A673 (cell line): ENCODE measurements at regions of chr3 and their contacts with region 1.

Region 1: DNA sequence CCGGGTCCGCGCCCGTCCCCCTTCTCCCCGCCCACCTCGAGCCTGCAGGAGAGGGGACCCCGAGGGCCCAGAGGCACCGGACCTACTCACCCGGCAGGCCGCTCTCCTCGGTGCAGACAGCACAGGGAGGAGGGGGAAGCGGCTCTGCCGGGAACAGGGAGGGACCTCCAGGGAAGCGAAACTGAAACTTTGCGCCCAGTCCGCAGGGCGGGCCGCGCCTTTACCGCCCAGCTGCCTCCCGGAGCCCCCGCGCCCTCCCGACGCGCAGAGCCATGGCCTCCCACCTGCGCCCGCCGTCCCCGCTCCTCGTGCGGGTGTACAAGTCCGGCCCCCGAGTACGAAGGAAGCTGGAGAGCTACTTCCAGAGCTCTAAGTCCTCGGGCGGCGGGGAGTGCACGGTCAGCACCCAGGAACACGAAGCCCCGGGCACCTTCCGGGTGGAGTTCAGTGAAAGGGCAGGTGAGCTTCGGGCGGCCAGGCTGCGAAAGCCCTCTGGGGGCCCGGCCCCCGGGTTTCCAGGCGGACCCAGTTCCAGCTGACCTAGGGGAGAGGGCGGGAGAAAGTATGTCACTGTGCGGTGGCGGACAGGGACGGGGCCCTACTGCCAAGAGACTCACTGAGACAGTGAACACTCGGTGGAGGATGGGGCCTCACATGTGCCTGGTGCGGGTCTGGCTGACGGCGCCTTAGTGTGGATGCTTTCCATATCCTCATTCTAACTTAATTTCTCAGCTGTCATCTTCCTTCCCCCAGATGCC is at the starts of genes DTX3L and PARP9:
- DNase-seq: peak; percentile 80
- H3K4me3 ChIP-seq: peak within 1 kb of the TSS; percentile 63
- H3K27ac ChIP-seq: peak within 1 kb of the TSS; percentile 83
- H3K4me1 ChIP-seq: peaks cover 15% of the 10 kb centered on the region
- H3K27me3 ChIP-seq: no peaks in the 10 kb centered on the region
- CTCF ChIP-seq: no peak
- total RNA-seq, gene DTX3L: 16.6 and 18.9 TPM in 2 replicates
- total RNA-seq, gene PARP9: 10.6 and 10.8 TPM in 2 replicates

Region 2: GRCh38 chr3:122004991-122005565 is 559.3 kb before region 1 on chr3:
- CTCF ChIA-PET with region 1: no interaction called
- POLR2A ChIA-PET with region 1: no interaction called
- intact Hi-C with region 1: no loop called
- DNase-seq: no peak
- H3K4me3 ChIP-seq: no peak overlapping the region
- H3K27ac ChIP-seq: no peak overlapping the region
- H3K4me1 ChIP-seq: peaks cover 8% of the 10 kb centered on the region
- H3K27me3 ChIP-seq: no peaks in the 10 kb centered on the region
- CTCF ChIP-seq: no peak

Region 3: GRCh38 chr3:122468896-122469533 is 95.3 kb before region 1 on chr3:
- CTCF ChIA-PET with region 1: no interaction called
- POLR2A ChIA-PET with region 1: no interaction called
- intact Hi-C with region 1: loop called (anchors 10 kb)
- DNase-seq: no peak
- H3K4me3 ChIP-seq: no peak overlapping the region
- H3K27ac ChIP-seq: no peak overlapping the region
- H3K4me1 ChIP-seq: no peaks in the 10 kb centered on the region
- H3K27me3 ChIP-seq: no peaks in the 10 kb centered on the region
- CTCF ChIP-seq: no peak